Dorsolateral prefrontal cortex (tissue), 120 donors: ENCODE measurements at regions of chr2 and their contacts with region 1.

Region 1: GRCh38 chr2:15939854-15940660 is at the start of gene MYCN:
- DNase-seq: peak; percentile 14 to 85 (median 75)
- H3K4me3 ChIP-seq: peak within 1 kb of the TSS; percentile 50 to 90 (median 71)
- H3K27ac ChIP-seq: peak within 1 kb of the TSS; percentile 7 to 92 (median 84)
- H3K27me3 ChIP-seq: peaks cover 0 to 11% (median 0%) of the 10 kb centered on the region in 45 donors
- CTCF ChIP-seq: peak in 53 of 56 donors; percentile 25 to 96 (median 88)
- total RNA-seq, gene MYCN: 1.4 to 20.5 (median 5.9) TPM

Region 2: DNA sequence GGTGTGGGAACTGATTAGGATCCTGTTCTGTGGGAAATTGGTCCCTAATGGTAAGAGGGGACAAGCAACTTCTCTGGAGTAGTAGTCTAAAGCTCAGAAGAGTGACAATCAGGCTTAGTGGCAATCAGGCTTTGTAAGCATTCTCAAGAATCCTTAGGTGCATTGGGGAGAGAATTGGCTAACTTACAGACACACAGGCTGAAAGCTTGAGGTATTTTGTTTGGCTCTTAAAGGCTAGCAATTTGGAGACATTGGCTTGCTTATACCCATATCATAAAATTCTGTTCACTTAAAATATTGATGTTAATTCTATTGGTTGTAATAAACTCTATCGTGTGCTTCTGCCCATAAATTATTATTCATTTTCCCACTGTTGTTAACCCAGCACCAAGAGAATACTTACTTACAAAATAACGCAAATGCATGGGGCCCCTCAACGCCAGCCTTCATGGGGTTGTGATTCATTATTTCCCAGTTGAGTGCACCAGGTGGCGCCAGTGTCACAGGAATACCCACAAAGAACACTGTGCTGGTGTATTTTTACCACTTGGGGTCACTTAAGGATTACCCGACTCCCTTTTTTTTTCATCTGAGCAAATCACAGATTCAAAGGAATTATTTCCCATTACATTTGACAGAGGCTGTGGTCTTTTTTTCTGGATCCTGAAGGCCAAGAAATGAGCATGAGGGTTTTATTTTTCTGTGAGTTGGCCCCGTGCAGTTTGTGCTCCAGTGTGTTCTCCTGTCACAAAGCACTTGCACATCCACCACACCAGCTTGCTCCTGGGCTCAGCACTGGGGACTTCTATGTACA is 302.9 kb before region 1 on chr2:
- intact Hi-C with region 1: loop called (anchors 1 to 5 kb)
- DNase-seq: peak; percentile 71 to 90 (median 76)
- H3K4me3 ChIP-seq: no peak overlapping the region
- H3K27ac ChIP-seq: peak overlapping the region in 29 of 59 donors; percentile 1 to 67 (median 40)
- H3K27me3 ChIP-seq: no peaks in the 10 kb centered on the region
- CTCF ChIP-seq: peak; percentile 73 to 99 (median 97)

Region 3: GRCh38 chr2:15799432-15799827 is 140.6 kb before region 1 on chr2:
- intact Hi-C with region 1: loop called (anchors 2 to 5 kb)
- DNase-seq: no peak
- H3K4me3 ChIP-seq: no peak overlapping the region
- H3K27ac ChIP-seq: peak overlapping the region in 27 of 59 donors; percentile 9 to 91 (median 80)
- H3K27me3 ChIP-seq: peaks cover 0 to 5% (median 0%) of the 10 kb centered on the region in 45 donors
- CTCF ChIP-seq: no peak

Region 4: DNA sequence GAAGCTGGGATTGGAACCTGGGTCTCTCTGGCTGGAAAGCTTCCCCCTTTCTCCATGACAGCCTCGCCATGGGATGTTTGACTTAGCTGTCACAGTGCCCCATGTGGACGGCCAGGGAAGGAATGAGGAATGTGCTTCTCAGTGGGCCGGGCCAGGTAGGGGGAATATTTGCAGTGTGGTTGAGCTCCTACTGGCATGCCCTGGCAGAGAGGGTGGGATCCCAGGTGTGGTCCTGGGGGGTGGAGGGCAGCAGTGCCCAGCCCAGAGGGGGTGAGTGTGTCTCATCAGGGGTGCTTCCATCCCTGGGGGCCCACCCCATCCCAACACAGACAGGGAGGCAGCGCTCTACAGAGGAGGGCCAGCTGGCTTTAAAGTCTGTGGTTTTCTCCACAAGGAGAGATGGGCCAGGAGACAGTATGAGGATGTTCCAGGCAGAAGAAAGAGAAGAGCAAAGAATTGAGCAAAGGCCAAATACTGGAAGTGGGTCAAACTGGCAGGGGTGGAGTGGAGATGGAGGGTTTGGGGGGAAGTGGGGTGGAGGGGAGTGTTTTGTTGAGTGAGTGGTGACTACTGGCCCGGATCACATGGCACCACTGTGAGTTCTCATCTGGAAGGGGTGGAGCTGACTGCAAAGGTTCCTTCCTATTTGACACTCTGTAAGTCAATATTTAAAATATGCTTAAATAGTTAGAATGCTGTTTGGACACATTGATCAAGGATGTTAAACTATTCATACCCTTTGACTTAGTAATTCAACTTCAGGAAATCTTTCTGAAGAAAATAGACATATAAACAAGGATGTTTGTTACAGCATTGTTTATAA is 94.3 kb after region 1 on chr2:
- intact Hi-C with region 1: loop called (anchors 2 to 5 kb)
- DNase-seq: no peak
- H3K4me3 ChIP-seq: no peak overlapping the region
- H3K27ac ChIP-seq: peak overlapping the region in 12 of 59 donors; percentile 3 to 73 (median 36)
- H3K27me3 ChIP-seq: peaks cover 0 to 3% (median 0%) of the 10 kb centered on the region in 45 donors
- CTCF ChIP-seq: peak in 12 of 56 donors; percentile 10 to 33 (median 20)

Region 5: GRCh38 chr2:16281451-16282336 is 341.6 kb after region 1 on chr2:
- intact Hi-C with region 1: loop called (anchors 1 to 2 kb)
- DNase-seq: peak in 5 of 10 donors; percentile 6 to 57 (median 38)
- H3K4me3 ChIP-seq: no peak overlapping the region
- H3K27ac ChIP-seq: no peak overlapping the region
- H3K27me3 ChIP-seq: no peaks in the 10 kb centered on the region
- CTCF ChIP-seq: peak; percentile 26 to 84 (median 68)

Region 6: DNA sequence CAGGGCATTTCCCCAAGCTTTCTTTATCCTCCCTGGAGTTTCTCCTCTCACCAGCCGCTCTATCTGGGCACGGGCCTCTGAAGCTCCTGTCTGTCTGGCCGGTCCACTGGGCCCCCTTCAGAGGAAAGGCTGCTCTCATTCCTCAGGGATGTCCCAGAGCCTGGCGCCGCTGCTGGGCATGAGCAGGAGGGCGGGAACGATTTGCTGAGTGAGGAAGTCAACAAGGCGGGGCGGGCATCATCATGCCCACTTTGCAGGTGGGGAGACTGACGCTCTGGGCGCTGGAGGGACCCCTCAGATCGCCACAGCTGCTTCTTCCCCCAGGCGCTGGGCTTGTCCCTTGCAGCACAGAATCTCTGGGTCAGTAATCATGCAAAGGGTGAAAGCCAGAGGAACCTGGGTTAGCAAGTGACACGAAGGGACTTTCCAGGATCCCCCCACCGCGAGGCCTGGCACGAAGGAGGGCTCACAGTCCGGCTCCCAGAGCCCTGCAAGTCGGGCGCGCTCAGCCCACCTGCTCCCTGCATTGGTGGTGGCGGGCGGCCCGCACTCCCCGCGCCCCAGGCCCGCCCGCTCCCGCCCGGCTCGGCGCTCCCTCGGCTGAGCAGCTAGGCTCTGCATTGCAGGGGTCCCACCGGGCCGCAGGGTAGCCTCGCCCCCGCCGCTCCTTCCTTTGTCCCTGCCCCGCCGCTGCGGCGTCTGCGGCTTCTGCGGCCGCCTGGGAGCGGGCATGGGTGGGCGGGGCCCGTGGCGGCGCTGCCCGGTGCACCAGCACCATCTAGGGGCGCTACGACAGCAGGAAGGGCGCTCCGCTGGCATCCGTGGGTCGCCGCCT is 567.8 kb after region 1 on chr2:
- intact Hi-C with region 1: loop called (anchors 2 kb)
- DNase-seq: peak in 8 of 10 donors; percentile 20 to 79 (median 50)
- H3K4me3 ChIP-seq: peak overlapping the region; percentile 44 to 76 (median 65)
- H3K27ac ChIP-seq: peak overlapping the region in 1 of 59 donors; percentile 34
- H3K27me3 ChIP-seq: peaks cover 0 to 7% (median 0%) of the 10 kb centered on the region in 45 donors
- CTCF ChIP-seq: peak in 55 of 56 donors; percentile 47 to 92 (median 75)